MCF 10A (cell line): ENCODE measurements at regions of chr10 and their contacts with region 1.

Region 1: DNA sequence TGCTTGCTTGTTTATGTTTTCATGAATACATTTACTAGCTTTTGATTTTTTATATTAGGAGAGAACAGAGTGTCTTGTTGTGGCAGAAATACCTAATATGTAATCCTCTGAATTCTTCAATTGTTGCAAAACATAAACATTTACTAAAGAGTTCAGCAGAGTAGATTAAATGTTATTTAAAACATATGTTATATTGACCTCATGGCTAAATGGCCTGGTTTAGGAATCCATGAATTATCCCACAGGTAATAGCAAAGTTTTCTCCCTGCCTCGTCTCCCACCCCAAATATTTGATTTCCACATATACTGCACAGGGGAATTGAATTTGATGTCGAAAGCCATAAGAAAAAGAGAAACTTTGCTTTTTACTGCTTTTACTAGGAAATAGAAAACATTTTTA is 111.8 kb downstream of the ADK start:
- DNase-seq: no peak
- H3K4me3 Mint-ChIP-seq: no peak overlapping the region
- H3K27ac Mint-ChIP-seq: no peak overlapping the region
- H3K4me1 Mint-ChIP-seq: peaks cover 4% of the 10 kb centered on the region
- H3K27me3 Mint-ChIP-seq: no peaks in the 10 kb centered on the region
- CTCF ChIP-seq: no peak

Region 2: DNA sequence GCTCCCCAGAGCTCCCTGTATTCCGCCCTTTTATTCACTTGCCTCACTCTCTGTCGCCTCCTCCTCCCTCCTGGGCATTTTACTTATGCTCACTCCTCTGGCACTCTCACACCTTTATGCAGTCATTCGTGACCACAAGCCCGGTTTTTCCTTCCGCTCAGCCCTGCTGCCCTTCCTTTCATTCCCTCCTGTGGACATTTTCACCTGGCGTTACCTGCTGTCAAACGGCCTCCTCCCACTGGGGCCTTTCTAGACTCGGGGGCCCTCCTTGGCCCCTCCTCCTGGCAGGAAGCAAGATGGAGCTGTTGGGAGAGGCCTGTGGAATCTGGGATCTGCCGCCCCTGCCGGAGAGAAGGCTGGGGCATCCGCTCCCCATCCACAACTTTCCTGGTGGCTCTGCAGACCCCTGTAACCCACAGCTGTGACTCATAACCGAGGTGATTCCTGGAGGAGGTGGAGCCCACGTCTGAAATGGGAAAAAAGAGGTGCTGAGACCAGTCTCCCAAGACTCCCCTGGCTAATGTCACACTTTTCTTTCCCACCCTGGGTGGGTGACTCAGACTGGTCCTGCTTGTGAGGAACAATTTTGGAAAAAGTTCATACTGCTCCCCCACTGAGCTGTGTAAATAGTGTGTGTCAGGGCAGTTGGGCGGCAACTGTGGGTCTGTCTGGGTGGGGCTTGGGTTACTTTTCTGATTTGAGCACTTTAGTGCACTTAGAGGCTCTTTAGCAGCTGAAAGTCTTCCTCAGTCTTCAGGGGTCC is 263.7 kb before region 1 on chr10:
- CTCF ChIA-PET with region 1: no interaction called
- POLR2A ChIA-PET with region 1: no interaction called
- intact Hi-C with region 1: no loop called
- DNase-seq: peak; percentile 83
- H3K4me3 Mint-ChIP-seq: peak overlapping the region; percentile 88
- H3K27ac Mint-ChIP-seq: peak overlapping the region; percentile 95
- H3K4me1 Mint-ChIP-seq: peaks cover 21% of the 10 kb centered on the region
- H3K27me3 Mint-ChIP-seq: no peaks in the 10 kb centered on the region
- CTCF ChIP-seq: no peak

Region 3: GRCh38 chr10:74394416-74394969 is 131.6 kb after region 1 on chr10:
- CTCF ChIA-PET with region 1: interaction called, 3 read pairs
- POLR2A ChIA-PET with region 1: no interaction called
- intact Hi-C with region 1: loop called (anchors 5 kb)
- DNase-seq: peak; percentile 17
- H3K4me3 Mint-ChIP-seq: no peak overlapping the region
- H3K27ac Mint-ChIP-seq: no peak overlapping the region
- H3K4me1 Mint-ChIP-seq: peaks cover 11% of the 10 kb centered on the region
- H3K27me3 Mint-ChIP-seq: no peaks in the 10 kb centered on the region
- CTCF ChIP-seq: no peak

Region 4: DNA sequence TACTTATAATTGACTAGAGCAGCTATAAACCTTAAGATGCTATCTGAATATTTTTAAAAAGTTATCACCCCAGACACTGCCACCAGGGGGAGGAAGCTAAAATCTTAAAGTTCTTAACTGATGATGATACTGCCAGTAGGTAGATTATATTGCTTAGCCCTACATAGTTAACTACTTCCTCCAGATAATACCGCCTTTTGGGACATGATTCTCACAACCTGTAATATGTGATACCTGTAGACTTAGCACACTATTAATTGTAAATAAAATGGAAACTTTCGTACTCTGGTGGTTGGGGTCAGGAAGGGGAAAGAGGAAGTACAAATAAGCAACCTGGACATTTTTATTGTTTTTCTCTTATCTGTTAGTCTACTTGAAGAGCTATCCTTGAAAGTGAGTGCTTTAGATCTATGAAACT is 157.1 kb after region 1 on chr10:
- CTCF ChIA-PET with region 1: interaction called, 3 read pairs
- POLR2A ChIA-PET with region 1: no interaction called
- intact Hi-C with region 1: loop called (anchors 5 kb)
- DNase-seq: peak; percentile 39
- H3K4me3 Mint-ChIP-seq: no peak overlapping the region
- H3K27ac Mint-ChIP-seq: no peak overlapping the region
- H3K4me1 Mint-ChIP-seq: no peaks in the 10 kb centered on the region
- H3K27me3 Mint-ChIP-seq: no peaks in the 10 kb centered on the region
- CTCF ChIP-seq: peak; percentile 35

Region 5: GRCh38 chr10:75019370-75019769 is 756.5 kb after region 1 on chr10:
- CTCF ChIA-PET with region 1: interaction called, 6 read pairs
- POLR2A ChIA-PET with region 1: no interaction called
- intact Hi-C with region 1: loop called (anchors 1 kb)
- DNase-seq: peak; percentile 38
- H3K4me3 Mint-ChIP-seq: no peak overlapping the region
- H3K27ac Mint-ChIP-seq: no peak overlapping the region
- H3K4me1 Mint-ChIP-seq: no peaks in the 10 kb centered on the region
- H3K27me3 Mint-ChIP-seq: no peaks in the 10 kb centered on the region
- CTCF ChIP-seq: peak; percentile 47